Left colon (tissue), 2 donors: ENCODE measurements at regions of chr14 and their contacts with region 1.

Region 1: DNA sequence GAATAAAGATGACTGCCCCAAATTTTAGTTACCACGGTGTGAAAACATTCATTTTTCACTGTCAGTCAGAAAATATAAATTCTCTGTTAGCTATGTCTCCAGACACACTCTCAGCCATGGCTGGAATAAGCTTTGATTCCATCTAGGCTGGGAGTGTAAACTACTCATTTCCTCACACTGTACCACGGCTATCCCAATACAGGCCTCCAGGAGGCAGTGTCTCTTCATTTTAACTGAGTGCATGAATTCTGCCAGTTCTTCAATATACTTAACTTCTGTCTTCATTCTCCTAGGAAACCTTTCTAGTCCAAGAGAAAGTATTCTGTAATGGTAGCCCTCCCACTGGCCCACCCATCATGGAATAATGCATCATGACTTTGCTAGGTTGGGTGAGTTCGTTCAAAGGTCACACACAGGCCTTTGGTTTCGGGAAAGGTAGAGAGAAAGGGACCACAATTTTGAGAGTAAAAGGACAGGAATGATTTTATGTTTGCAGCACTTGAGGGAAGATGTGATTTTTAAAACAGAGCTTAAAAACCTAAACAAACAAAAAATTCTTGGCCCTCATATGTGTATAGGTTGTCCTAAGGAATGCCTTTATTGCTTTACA is 381.1 kb downstream of the SEC23A start:
- DNase-seq: peak in 1 of 2 donors; percentile 83
- ATAC-seq: peak; percentile 97

Region 2: DNA sequence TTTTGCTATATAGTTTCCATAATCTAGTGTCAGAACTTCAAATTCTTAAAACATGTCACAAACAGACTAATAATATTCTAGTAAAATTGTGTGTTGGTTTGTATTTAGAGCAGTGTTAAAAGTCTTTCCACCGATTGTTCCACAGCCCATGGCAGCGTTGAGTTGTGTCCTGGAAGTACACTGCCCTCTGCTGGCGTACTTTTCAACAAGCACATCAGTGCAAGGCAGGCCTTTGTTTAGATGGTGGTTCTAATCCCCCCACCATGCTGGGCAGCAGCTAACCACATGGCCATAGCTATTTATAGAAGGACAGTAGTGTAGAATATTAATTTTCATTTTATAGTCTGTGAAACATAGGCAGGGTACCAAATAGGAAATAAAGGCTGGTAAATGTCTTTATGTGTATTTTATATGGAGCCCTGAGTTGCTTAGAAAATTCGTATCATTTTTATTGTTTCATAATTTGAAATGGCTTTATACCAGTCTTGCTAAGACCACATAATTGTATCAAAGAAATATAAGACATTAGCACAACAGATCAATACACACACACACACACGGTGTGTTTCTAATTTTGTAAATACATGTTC is 145.7 kb after region 1 on chr14:
- intact Hi-C with region 1: loop called in 1 of 2 experiments (anchors 2 kb)
- DNase-seq: peak; percentile 74 to 84
- ATAC-seq: peak; percentile 88

Region 3: GRCh38 chr14:39015360-39015961 is 293.5 kb after region 1 on chr14:
- intact Hi-C with region 1: loop called in 1 of 2 experiments (anchors 5 kb)
- DNase-seq: peak in 1 of 2 donors; percentile 23
- ATAC-seq: peak; percentile 73